K562 (cell line): ENCODE measurements at regions of chr21 and their contacts with region 1.

Region 1: GRCh38 chr21:30502041-30502440 is at the start of gene KRTAP19-5:
- DNase-seq: no peak
- ATAC-seq: no peak
- H3K4me3 ChIP-seq: no peak within 1 kb of the TSS
- H3K27ac ChIP-seq: no peak within 1 kb of the TSS
- H3K4me1 ChIP-seq: no peaks in the 10 kb centered on the region
- H3K27me3 ChIP-seq: no peaks in the 10 kb centered on the region
- CTCF ChIP-seq: no peak
- EP300 ChIP-seq: no peak
- POLR2A ChIP-seq: no peak
- RAD21 ChIP-seq: no peak
- polyA plus RNA-seq, gene KRTAP19-5: not detected

Region 2: GRCh38 chr21:30329203-30329875 is 172.7 kb before region 1 on chr21:
- CTCF ChIA-PET with region 1: no interaction called
- POLR2A ChIA-PET with region 1: no interaction called
- in situ Hi-C with region 1: no loop called
- intact Hi-C with region 1: no loop called
- DNase-seq: no peak
- ATAC-seq: no peak
- H3K4me3 ChIP-seq: no peak overlapping the region
- H3K27ac ChIP-seq: no peak overlapping the region
- H3K4me1 ChIP-seq: no peaks in the 10 kb centered on the region
- H3K27me3 ChIP-seq: no peaks in the 10 kb centered on the region
- CTCF ChIP-seq: no peak
- EP300 ChIP-seq: no peak
- POLR2A ChIP-seq: no peak
- RAD21 ChIP-seq: no peak

Region 3: DNA sequence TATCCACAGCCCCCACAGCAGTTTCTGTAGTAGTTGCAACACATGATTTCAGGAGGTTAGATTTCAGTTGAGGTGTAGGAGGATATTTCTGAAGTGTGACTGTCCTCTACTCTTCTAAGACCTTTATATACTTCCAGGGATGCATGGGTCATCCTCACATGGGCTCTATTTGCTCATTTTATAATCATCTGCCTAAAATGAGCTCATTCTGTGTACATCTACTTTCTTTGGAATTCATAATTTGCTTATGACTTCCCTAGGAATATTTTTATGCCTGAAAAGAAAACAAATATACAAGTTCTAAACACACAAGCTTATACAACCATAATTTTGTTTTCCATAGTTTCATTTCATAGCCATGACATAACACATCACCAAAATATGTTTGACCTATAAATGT is 245.1 kb after region 1 on chr21 and contains the start of gene KRTAP21-2:
- CTCF ChIA-PET with region 1: no interaction called
- POLR2A ChIA-PET with region 1: no interaction called
- in situ Hi-C with region 1: no loop called
- intact Hi-C with region 1: loop called (anchors 10 kb)
- DNase-seq: no peak
- ATAC-seq: no peak
- H3K4me3 ChIP-seq: no peak within 1 kb of the TSS
- H3K27ac ChIP-seq: no peak within 1 kb of the TSS
- H3K4me1 ChIP-seq: no peaks in the 10 kb centered on the region
- H3K27me3 ChIP-seq: no peaks in the 10 kb centered on the region
- CTCF ChIP-seq: no peak
- EP300 ChIP-seq: no peak
- POLR2A ChIP-seq: no peak
- RAD21 ChIP-seq: no peak
- polyA plus RNA-seq, gene KRTAP21-2: not detected

Region 4: DNA sequence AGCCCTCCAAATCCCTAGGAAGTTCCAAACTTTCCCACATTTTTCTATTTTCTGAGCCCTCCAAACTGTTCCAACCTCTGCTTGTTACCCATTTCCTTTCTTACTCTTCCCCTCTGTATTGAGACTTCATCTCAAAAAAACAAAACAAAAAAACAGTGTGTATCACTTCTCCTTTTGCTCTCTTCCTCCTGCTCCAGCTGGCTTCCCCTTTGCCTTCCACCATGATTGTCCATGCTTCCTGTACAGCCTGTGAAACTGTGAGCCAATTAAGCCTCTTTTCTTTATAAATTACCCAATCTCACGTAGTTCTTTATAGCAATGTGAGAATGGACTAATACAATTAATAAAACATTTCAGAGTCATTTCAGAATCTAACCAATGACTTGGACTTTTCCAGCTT is 605.8 kb after region 1 on chr21:
- CTCF ChIA-PET with region 1: no interaction called
- POLR2A ChIA-PET with region 1: no interaction called
- in situ Hi-C with region 1: no loop called
- intact Hi-C with region 1: no loop called
- DNase-seq: no peak
- ATAC-seq: no peak
- H3K4me3 ChIP-seq: no peak overlapping the region
- H3K27ac ChIP-seq: no peak overlapping the region
- H3K4me1 ChIP-seq: no peaks in the 10 kb centered on the region
- H3K27me3 ChIP-seq: no peaks in the 10 kb centered on the region
- CTCF ChIP-seq: no peak
- EP300 ChIP-seq: no peak
- POLR2A ChIP-seq: no peak
- RAD21 ChIP-seq: no peak